OCI-LY7 (cell line): ENCODE measurements at regions of chr12 and their contacts with region 1.

Region 1: DNA sequence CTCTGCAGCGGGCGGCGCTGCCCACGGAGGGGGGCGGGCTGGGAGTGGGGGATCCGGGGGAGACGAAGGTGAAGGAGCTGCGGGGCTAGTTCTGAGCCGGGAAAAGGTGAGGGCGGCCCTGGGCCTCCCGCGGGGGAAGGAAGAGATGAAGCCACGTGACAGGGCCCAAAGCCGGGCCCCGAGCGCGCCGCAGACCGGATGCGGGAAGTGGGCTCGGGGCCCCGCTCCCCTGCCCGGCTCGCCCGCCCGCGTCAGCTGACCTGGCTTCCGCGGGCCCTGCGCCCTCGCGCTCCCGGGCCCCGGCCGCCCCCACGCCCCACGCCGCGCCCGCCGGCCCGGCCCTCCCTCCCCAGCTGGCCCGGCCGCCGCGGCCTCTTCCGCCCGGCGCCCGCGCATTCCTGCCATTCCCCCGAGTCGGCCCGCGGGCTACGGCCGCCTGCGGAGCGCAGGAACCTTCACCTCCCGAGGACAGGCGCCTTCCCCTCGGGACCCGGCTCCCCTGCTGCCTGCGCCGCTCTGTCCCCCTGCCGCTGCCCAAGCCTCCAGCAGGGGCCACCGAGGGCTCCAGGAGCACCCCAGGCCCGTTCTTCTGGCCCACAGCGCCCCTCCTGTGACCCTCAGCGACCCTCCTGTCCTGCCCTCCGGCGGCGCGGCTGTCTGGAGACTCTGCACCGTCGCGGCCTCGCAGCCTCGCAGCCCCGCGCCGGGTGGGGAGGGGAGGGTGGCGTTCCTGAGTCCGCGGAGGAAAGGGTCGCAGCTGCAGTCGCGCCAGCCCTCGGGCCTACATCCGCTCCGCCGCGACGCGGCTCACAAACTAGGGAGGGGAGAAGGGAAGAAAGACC is 20.4 kb downstream of the NINJ2 start:
- DNase-seq: peak; percentile 87
- H3K4me3 ChIP-seq: peak overlapping the region; percentile 71
- H3K27ac ChIP-seq: peak overlapping the region; percentile 69
- H3K4me1 ChIP-seq: peaks cover 41% of the 10 kb centered on the region
- CTCF ChIP-seq: peak; percentile 46

Region 2: DNA sequence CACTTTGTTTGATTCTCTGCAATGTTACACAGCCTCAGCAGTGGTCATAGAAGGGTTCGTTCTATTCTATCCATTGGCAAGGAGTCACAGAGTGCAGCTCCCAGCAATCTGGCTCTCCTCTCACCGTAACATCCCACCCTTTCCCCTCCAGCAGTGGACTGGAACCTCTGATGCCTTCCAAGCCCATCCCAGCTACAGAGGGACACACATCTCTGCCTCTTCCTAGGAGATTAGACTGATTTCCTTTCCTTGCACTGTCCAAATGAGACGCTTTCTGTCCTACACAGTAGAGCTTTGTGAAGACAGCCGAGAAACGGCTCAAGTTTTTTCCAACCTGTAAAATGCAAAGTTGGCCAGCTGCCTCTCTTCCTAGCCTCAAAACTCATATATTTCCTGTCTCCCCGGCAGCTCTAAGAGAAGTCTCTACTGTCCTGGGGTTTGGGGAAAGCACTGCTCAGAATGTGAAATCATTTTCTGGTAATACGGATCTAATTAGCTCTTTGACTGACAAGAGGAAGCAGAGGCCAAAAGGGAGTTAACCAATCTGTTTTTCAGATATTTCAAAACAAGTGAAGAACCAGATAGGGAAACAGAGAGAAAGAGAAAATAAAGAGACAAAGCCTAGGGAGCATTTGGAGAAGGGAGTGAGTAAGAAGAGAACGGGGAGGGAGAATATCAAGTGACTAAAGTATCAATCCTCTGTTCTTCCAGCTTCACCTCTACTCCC is 19.9 kb after region 1 on chr12:
- CTCF ChIA-PET with region 1: no interaction called
- POLR2A ChIA-PET with region 1: interaction called, 19 read pairs
- intact Hi-C with region 1: no loop called
- DNase-seq: no peak
- H3K4me3 ChIP-seq: peak overlapping the region; percentile 21
- H3K27ac ChIP-seq: peak overlapping the region; percentile 46
- H3K4me1 ChIP-seq: peaks cover 90% of the 10 kb centered on the region
- CTCF ChIP-seq: no peak

Region 3: DNA sequence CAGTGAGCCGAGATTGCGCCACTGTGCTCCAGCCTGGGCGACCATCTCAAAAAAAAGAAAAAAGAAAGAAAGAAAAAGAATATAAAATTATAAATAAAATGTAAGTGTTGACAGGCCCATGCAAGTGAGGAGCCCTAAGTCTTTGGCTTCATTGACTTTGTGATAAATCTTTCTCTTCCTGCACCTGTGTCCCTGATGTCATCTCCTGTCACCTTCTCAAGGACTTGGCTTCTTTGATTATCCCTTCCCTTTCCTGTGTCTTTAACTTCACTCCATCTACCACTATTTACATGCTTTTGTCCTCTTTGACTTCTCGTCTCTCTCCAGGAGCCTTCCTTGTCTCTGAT is 75.9 kb after region 1 on chr12:
- CTCF ChIA-PET with region 1: no interaction called
- POLR2A ChIA-PET with region 1: interaction called, 9 read pairs
- intact Hi-C with region 1: loop called (anchors 1 kb)
- DNase-seq: peak; percentile 52
- H3K4me3 ChIP-seq: peak overlapping the region; percentile 54
- H3K27ac ChIP-seq: peak overlapping the region; percentile 46
- H3K4me1 ChIP-seq: peaks cover 34% of the 10 kb centered on the region
- CTCF ChIP-seq: no peak

Region 4: GRCh38 chr12:737122-737739 is 94.4 kb after region 1 on chr12:
- CTCF ChIA-PET with region 1: no interaction called
- POLR2A ChIA-PET with region 1: no interaction called
- intact Hi-C with region 1: no loop called
- DNase-seq: no peak
- H3K4me3 ChIP-seq: no peak overlapping the region
- H3K27ac ChIP-seq: no peak overlapping the region
- H3K4me1 ChIP-seq: no peaks in the 10 kb centered on the region
- CTCF ChIP-seq: no peak

Region 5: DNA sequence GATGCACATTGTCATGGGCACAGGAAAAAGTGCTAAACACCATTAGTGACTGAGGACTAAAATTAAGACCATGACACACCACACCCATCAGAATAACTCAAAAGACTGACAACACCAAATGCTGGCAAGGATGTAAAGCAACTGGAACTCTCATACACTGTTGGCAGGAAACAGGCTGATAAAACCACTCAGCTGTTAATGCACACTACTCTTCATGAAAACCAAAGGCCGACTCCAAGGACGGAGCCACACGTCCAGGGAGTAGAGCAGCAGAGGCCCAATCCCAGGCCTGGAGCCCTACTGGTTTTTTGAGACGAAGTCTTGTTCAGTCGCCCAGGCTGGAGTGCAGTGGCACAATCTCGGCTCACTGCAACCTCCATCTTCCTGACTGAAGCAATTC is 300.2 kb after region 1 on chr12:
- CTCF ChIA-PET with region 1: no interaction called
- POLR2A ChIA-PET with region 1: no interaction called
- intact Hi-C with region 1: no loop called
- DNase-seq: no peak
- H3K4me3 ChIP-seq: no peak overlapping the region
- H3K27ac ChIP-seq: no peak overlapping the region
- H3K4me1 ChIP-seq: peaks cover 16% of the 10 kb centered on the region
- CTCF ChIP-seq: no peak